ENCODE measurements at regions of chr17 and their contacts with region 1.

Region 1: GRCh38 chr17:40854159-40854814 is 12.7 kb downstream of the KRT12 start:
- DNase-seq: no peak
- H3K4me3 ChIP-seq: no peak overlapping the region
- H3K27ac ChIP-seq: no peak overlapping the region
- H3K4me1 ChIP-seq: no peaks in the 10 kb centered on the region
- H3K27me3 ChIP-seq: no peaks in the 10 kb centered on the region
- CTCF ChIP-seq: no peak

Region 2: GRCh38 chr17:40615295-40615988 is 238.8 kb before region 1 on chr17:
- intact Hi-C with region 1: no loop called
- DNase-seq: no peak
- H3K4me3 ChIP-seq: no peak overlapping the region
- H3K27ac ChIP-seq: no peak overlapping the region
- H3K4me1 ChIP-seq: no peaks in the 10 kb centered on the region
- H3K27me3 ChIP-seq: no peaks in the 10 kb centered on the region
- CTCF ChIP-seq: no peak

Region 3: GRCh38 chr17:40809721-40810421 is 44.4 kb before region 1 on chr17:
- intact Hi-C with region 1: loop called (anchors 5 kb)
- DNase-seq: no peak
- H3K4me3 ChIP-seq: no peak overlapping the region
- H3K27ac ChIP-seq: peak overlapping the region in 1 of 2 donors; percentile 13
- H3K4me1 ChIP-seq: peaks cover 5 to 7% of the 10 kb centered on the region in 2 donors
- H3K27me3 ChIP-seq: no peaks in the 10 kb centered on the region
- CTCF ChIP-seq: no peak

Region 4: DNA sequence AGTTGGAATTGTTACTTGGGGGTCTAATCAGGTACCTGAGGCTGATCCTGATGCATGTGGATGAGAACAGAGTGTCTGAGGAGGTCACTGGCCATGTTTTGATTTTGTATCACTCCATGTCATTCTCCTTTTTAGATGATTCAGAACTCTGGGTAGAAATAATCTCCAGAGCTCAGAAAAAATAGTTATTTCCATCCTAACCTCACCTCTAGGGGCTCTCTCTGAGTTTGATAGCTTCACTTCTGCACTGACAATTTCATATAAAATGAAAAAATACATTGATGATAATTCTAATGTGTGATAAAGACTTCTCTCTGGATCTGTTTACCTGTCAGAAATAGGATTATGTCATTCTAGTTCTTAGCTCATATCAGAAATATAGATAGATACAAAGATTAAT is 19.0 kb after region 1 on chr17:
- intact Hi-C with region 1: no loop called
- DNase-seq: no peak
- H3K4me3 ChIP-seq: no peak overlapping the region
- H3K27ac ChIP-seq: no peak overlapping the region
- H3K4me1 ChIP-seq: no peaks in the 10 kb centered on the region
- H3K27me3 ChIP-seq: no peaks in the 10 kb centered on the region
- CTCF ChIP-seq: no peak

Region 5: DNA sequence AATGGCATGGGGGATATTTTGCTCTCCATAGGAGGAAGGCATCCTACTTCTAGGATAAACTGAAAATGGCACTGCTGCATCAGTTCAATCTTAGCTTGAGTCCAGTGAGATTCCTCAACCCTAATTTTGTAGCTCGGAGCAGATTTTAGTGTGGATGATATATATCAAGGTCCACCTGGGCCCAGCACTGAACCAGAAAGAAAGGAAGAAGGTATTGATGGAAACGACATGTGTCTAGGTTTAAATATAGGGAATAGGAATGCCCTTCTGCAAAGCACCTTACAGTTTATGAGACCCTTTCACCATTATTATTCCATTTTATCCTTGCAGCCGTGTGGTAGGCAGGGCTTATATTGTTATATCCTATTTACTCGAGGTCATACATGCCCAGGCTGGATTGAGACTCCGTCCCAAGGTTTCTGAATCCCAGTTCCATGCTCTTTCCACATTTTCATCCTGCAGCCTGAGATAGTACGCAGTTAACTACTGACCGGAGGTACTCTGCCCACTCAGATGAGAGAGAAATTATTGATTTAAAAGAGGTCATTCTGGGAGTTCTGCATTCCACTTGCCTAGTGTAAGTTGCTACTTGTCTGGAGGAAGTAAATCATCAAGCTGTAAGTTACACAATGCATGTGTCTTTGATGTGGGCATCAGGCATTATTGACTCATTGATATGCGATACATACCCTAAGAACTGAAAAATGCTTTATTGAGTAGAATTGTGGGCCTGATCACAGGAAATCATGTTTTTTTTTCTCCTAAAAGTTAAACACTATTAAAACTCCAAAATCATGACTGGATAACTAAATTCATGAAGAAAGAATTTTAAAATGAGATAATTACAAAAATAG is 102.3 kb after region 1 on chr17:
- intact Hi-C with region 1: no loop called
- DNase-seq: no peak
- H3K4me3 ChIP-seq: no peak overlapping the region
- H3K27ac ChIP-seq: no peak overlapping the region
- H3K4me1 ChIP-seq: no peaks in the 10 kb centered on the region
- H3K27me3 ChIP-seq: no peaks in the 10 kb centered on the region
- CTCF ChIP-seq: no peak